ENCODE measurements at regions of chr1 and their contacts with region 1.

Region 1: DNA sequence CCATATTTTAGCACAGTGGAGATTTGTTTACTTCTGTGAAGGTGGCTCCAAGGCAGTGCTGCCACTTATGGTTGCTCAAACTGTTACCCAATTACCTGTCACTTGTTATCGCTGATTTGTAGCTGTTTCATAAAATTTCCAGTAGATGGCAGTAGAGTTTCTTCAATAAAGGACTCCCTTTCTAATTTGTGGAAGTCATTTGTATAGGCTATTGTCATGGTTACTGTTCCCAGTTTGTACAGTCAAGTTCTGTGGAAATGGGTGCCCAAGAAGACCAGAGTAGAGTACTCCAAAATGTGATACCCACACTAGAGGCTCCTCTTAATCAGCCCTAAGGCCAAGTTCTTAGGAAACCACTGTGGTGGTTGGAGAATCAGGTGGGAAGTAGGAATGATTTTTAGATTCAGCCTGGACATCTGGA is 186.1 kb downstream of the CLEC20A start:
- H3K4me3 ChIP-seq: no peak overlapping the region
- H3K27ac ChIP-seq: no peak overlapping the region
- H3K4me1 ChIP-seq: no peaks in the 10 kb centered on the region
- CTCF ChIP-seq: peak; percentile 39; the same call in 1 of the 2 replicates

Region 2: DNA sequence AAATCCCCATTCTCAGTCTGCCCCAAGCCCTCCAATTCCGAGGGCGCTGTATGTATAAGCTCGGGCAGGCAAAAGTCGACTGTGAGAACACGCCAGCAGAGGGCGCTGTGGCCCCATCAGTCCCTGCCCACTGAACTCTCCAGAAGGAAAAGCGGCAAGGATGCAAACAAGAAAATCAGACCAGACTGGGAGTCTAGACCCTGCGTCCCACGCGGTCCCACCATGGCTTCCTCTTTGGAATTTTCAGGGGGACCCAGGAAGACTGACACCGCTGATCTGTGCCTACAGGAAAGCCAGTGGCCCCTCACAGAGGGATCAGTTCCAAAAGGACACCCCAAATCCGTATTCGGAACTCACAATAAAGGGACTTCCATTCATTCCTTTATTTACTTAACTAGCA is 221.7 kb after region 1 on chr1:
- CTCF ChIA-PET with region 1: interaction called, 19 read pairs
- POLR2A ChIA-PET with region 1: no interaction called
- H3K4me3 ChIP-seq: no peak overlapping the region
- H3K27ac ChIP-seq: no peak overlapping the region
- H3K4me1 ChIP-seq: no peaks in the 10 kb centered on the region; the same call in 1 of the 2 replicates
- CTCF ChIP-seq: peak; percentile 77